K562 (cell line): ENCODE measurements at regions of chr7 and their contacts with region 1.

Region 1: GRCh38 chr7:30564243-30564892 is 30.3 kb upstream of the GARS1 start:
- DNase-seq: peak; percentile 78 to 90 (median 82)
- ATAC-seq: peak; percentile 99
- H3K4me3 ChIP-seq: no peak overlapping the region
- H3K27ac ChIP-seq: peak overlapping the region; percentile 2; the same call in 1 of the 3 replicates
- H3K4me1 ChIP-seq: peaks cover 0 to 4% of the 10 kb centered on the region in 2 experiments; a peak in 1 of 5 replicates
- H3K27me3 ChIP-seq: no peaks in the 10 kb centered on the region
- CTCF ChIP-seq: peak; percentile 81 to 95 (median 89)
- EP300 ChIP-seq: no peak
- POLR2A ChIP-seq: no peak
- RAD21 ChIP-seq: peak; percentile 86 to 95

Region 2: GRCh38 chr7:30074422-30075030 is 489.8 kb before region 1 on chr7:
- CTCF ChIA-PET with region 1: no interaction called
- POLR2A ChIA-PET with region 1: no interaction called
- in situ Hi-C with region 1: no loop called
- intact Hi-C with region 1: loop called (anchors 10 kb)
- DNase-seq: peak; percentile 16 to 48 (median 28)
- ATAC-seq: peak; percentile 63; the same call in 2 of the 3 replicates
- H3K4me3 ChIP-seq: no peak overlapping the region
- H3K27ac ChIP-seq: no peak overlapping the region
- H3K4me1 ChIP-seq: no peaks in the 10 kb centered on the region
- H3K27me3 ChIP-seq: no peaks in the 10 kb centered on the region
- CTCF ChIP-seq: peak; percentile 28 to 70 (median 49); a peak in 4 of 6 replicates
- EP300 ChIP-seq: no peak
- POLR2A ChIP-seq: no peak
- RAD21 ChIP-seq: peak; percentile 52 to 75

Region 3: GRCh38 chr7:30164567-30164966 is 399.8 kb before region 1 on chr7:
- CTCF ChIA-PET with region 1: interaction called, 4 read pairs
- POLR2A ChIA-PET with region 1: no interaction called
- in situ Hi-C with region 1: loop called (anchors 10 kb)
- intact Hi-C with region 1: loop called (anchors 1 kb)
- DNase-seq: peak; percentile 37 to 59 (median 50)
- ATAC-seq: peak; percentile 70
- H3K4me3 ChIP-seq: no peak overlapping the region
- H3K27ac ChIP-seq: no peak overlapping the region
- H3K4me1 ChIP-seq: peaks cover 12 to 39% of the 10 kb centered on the region in 2 experiments
- H3K27me3 ChIP-seq: peaks cover 26 to 34% of the 10 kb centered on the region in 2 experiments
- CTCF ChIP-seq: peak; percentile 54 to 81 (median 63); a peak in 4 of 6 replicates
- EP300 ChIP-seq: no peak
- POLR2A ChIP-seq: no peak
- RAD21 ChIP-seq: peak; percentile 75 to 79

Region 4: GRCh38 chr7:30276203-30276900 is 288.0 kb before region 1 on chr7:
- CTCF ChIA-PET with region 1: interaction called, 10 read pairs
- POLR2A ChIA-PET with region 1: interaction called, 3 read pairs
- in situ Hi-C with region 1: no loop called
- intact Hi-C with region 1: loop called (anchors 1 kb)
- DNase-seq: peak in 2 of 4 experiments; percentile 57 to 75
- ATAC-seq: peak; percentile 91
- H3K4me3 ChIP-seq: no peak overlapping the region
- H3K27ac ChIP-seq: no peak overlapping the region
- H3K4me1 ChIP-seq: peaks cover 0 to 5% of the 10 kb centered on the region in 2 experiments; a peak in 3 of 5 replicates
- H3K27me3 ChIP-seq: no peaks in the 10 kb centered on the region
- CTCF ChIP-seq: peak; percentile 82 to 86 (median 82)
- EP300 ChIP-seq: no peak
- POLR2A ChIP-seq: no peak
- RAD21 ChIP-seq: peak; percentile 85 to 94

Region 5: DNA sequence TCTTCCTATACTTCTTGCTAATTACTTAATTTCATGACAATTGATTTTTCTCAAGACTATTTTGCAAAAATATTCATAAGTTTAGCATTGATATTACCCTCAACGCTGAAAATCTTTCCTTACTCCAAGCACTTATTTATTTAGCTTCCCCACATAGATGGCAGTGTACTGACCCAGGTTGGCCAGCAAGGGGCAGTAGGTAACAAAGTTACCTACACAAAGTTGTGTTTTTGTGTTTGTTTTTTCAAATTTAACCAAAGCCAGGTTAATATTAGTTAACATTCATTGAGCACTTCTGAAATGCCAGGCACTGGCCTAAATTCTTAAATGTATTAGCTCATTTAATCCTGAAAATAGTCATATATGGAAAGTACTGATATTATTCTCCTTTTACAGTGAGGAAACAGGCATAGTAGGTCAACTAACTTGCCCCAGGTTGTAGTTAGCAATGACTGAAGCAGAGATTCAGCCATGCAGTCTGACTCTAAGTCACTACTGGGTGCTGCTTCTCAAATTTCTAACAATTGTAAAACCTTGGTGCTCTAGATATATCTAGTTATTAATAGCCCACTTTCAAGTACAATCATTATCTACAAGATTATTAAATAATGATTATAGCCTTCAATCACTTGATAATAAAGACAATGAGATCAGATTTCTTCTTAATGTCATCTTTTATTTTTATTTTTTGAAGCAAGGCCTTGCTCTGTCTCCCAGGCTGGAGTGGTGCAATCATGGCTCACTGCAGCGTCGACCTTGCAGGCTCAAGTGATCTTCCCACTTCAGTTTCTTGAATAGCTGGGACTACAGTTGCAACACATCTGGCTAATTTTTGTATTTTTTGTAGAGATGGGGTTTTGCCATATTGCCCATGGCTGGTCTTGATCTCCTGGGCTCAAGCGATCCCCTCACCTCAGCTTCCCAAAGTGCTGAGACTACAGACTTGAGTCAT is 54.0 kb before region 1 on chr7:
- CTCF ChIA-PET with region 1: interaction called, 12 read pairs
- POLR2A ChIA-PET with region 1: interaction called, 3 read pairs
- in situ Hi-C with region 1: no loop called
- intact Hi-C with region 1: loop called (anchors 1 kb)
- DNase-seq: peak; percentile 20 to 65 (median 42)
- ATAC-seq: peak; percentile 80
- H3K4me3 ChIP-seq: no peak overlapping the region
- H3K27ac ChIP-seq: no peak overlapping the region
- H3K4me1 ChIP-seq: no peaks in the 10 kb centered on the region; a peak in 2 of 5 replicates
- H3K27me3 ChIP-seq: no peaks in the 10 kb centered on the region
- CTCF ChIP-seq: peak; percentile 66 to 81 (median 78); a peak in 5 of 6 replicates
- EP300 ChIP-seq: no peak
- POLR2A ChIP-seq: no peak
- RAD21 ChIP-seq: peak; percentile 40 to 77

Region 6: GRCh38 chr7:30548762-30549344 is 15.5 kb before region 1 on chr7:
- CTCF ChIA-PET with region 1: interaction called, 22 read pairs
- POLR2A ChIA-PET with region 1: interaction called, 4 read pairs
- in situ Hi-C with region 1: no loop called
- intact Hi-C with region 1: loop called (anchors 1 kb)
- DNase-seq: peak; percentile 69 to 75 (median 72)
- ATAC-seq: peak; percentile 97
- H3K4me3 ChIP-seq: no peak overlapping the region
- H3K27ac ChIP-seq: no peak overlapping the region
- H3K4me1 ChIP-seq: peaks cover 0 to 10% of the 10 kb centered on the region in 2 experiments; a peak in 3 of 5 replicates
- H3K27me3 ChIP-seq: no peaks in the 10 kb centered on the region
- CTCF ChIP-seq: peak; percentile 72 to 79 (median 77)
- EP300 ChIP-seq: no peak
- POLR2A ChIP-seq: no peak
- RAD21 ChIP-seq: peak; percentile 57 to 80